ENCODE measurements at regions of chr1 and their contacts with region 1.

Region 1: GRCh38 chr1:207885129-207886032 is 25.5 kb downstream of the CD34 start:
- DNase-seq: peak; percentile 82
- CTCF ChIP-seq: peak; percentile 94

Region 2: DNA sequence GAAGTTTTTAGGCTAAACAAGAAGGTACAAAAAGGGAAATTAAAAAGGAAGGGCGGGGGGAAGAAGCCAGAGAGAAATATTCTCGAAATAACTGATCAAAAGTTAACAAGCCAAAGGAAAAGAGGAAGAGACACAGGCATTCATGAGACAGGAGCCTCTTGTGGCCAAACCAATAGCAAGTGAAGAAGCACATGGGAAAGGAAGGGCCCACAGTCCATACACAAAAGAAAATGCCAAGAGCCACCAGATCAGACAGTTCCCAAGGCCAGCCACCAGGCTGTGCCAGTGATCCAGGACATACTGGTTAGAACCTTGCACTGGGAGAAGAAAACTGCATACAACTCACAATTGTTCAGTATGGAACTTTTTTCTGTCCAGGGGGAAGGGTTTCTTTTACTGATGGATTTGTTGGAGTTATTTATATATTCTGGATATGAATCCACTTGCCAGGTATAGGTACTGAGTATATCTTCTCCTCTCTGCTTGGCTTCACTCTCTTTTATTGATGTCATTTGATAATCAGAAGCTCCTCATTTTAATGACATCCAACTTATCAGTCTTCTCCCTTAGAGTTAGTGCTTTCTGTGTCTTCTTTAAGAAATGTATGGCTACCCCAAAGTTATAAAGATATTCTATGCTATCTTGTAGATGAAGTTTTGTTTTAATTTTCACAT is 56.8 kb before region 1 on chr1:
- CTCF ChIA-PET with region 1: interaction called, 53 read pairs
- POLR2A ChIA-PET with region 1: interaction called, 3 read pairs
- DNase-seq: peak; percentile 47
- CTCF ChIP-seq: peak; percentile 81

Region 3: GRCh38 chr1:207863893-207864535 is 21.4 kb before region 1 on chr1:
- CTCF ChIA-PET with region 1: interaction called, 319 read pairs
- POLR2A ChIA-PET with region 1: interaction called, 3 read pairs
- DNase-seq: peak; percentile 63
- CTCF ChIP-seq: no peak

Region 4: GRCh38 chr1:207910591-207911354 is 25.4 kb after region 1 on chr1 and contains the start of gene CD34:
- CTCF ChIA-PET with region 1: interaction called, 181 read pairs
- POLR2A ChIA-PET with region 1: no interaction called
- DNase-seq: no peak
- CTCF ChIP-seq: no peak

Region 5: GRCh38 chr1:207952617-207953542 is 67.5 kb after region 1 on chr1:
- CTCF ChIA-PET with region 1: interaction called, 222 read pairs
- POLR2A ChIA-PET with region 1: no interaction called
- DNase-seq: peak; percentile 26
- CTCF ChIP-seq: no peak

Region 6: DNA sequence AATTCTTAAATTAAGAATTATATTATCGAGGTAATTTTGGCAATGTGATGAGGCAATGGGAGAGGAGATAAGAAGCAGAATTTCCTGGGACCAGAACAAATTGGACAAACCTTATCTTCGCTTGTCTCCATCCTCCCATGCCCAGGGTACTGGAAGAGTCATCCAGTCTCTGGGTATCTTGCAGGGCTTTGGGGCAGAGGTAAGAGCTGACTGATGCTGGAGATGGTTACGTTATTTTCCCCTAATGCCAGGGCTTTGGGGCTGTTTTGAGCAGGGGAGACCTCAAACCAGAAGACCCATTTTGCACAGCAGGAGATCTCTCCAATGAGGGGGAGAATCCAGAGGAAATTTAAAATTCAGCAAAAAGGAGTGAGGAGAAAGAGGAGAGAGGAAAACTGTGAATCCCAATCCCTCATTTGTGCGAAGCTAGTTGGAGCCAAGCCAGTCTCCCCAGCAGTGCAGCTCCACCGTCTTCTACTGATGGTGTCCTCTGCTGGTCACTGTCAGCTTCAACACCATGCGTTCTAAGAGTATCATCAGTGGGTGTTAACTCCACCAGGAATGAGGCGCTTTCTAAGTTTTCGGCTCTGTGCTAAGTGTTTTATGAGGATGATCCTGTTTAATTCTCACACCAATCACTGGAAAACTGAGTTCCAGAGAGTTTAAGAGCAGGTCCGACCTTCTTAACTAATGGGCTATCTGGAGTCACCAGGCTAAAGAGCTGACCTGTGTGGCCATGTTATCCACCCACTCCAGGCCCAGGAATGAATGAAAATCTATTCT is 112.3 kb after region 1 on chr1:
- CTCF ChIA-PET with region 1: interaction called, 117 read pairs
- POLR2A ChIA-PET with region 1: no interaction called
- DNase-seq: peak; percentile 62
- CTCF ChIP-seq: peak; percentile 89